ENCODE measurements at regions of chr2 and their contacts with region 1.

Region 1: DNA sequence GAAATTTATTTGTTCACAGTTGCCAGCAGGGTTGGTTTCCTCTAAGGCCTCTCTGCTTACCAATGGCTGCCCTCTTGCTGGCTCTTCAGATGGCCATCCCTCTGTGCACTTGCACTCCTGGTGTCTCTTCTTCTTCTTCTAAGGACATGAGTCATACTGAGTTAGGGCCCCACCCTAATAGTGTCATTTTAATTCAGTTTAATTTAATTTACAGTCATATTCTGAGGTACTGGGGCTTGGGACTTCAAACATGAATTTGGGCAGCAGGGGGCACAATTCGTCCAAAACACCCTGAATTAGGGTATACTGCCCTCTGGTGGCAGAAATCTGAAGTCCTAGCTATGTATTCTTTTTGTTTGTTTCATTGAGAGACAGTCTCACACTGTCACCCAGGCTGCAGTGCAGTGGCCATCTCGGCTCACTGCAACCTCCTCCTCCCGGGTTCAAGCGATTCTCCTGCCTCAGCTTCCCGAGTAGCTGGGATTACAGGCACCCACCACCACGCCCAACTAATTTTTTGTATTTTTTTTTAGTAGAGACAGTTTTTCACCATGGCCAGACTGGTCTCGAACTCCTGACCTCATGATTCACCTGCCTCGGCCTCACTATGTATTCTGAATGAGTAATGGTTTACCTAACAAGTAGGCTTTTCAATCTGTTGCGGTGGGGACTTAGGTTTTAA is 19.8 kb downstream of the SLC4A1AP start:
- DNase-seq: peak; percentile 36
- H3K4me3 ChIP-seq: no peak overlapping the region
- CTCF ChIP-seq: peak; percentile 71

Region 2: DNA sequence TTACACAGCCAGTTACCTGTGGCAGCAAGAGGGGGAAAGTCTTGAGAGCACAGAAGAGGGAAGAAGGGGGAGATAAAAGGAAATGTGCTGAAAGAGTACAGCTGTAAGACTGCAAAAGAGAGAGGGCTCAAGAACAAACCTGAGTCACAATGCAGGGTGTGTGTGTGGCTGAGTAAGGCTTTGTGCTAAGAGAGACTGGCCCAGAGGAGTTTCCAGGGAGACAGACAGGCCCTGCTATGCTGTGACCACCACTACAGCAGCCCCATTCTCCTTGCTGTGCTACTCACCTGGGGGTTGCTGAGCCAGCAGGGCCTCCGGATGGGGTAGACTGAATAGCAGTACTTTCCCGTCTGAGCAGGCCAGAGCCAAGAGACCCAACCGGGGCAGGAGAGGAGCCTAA is 348.2 kb before region 1 on chr2:
- CTCF ChIA-PET with region 1: no interaction called
- POLR2A ChIA-PET with region 1: no interaction called
- DNase-seq: no peak
- H3K4me3 ChIP-seq: no peak overlapping the region
- CTCF ChIP-seq: no peak

Region 3: GRCh38 chr2:27400348-27401135 is 283.0 kb before region 1 on chr2:
- CTCF ChIA-PET with region 1: interaction called, 57 read pairs
- POLR2A ChIA-PET with region 1: no interaction called
- DNase-seq: no peak
- H3K4me3 ChIP-seq: no peak overlapping the region
- CTCF ChIP-seq: no peak

Region 4: DNA sequence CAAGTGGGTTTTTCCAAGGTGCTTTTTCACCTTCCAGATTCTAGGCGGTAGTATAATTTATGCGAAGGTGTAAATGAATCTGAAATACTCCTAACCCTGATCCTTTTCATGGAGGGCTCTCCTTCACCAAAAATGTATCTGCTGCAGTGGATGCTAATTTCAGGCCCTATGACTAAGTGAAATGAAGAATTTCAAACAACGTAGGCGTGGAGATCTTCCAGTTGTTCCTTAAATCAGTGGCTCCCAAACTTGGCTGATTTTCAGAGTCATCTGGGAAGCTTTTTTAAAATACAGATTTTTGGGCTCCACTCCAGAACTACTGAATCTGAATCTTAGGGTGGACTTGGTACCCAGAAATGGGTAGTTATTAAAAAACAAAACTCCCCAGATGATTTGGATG is 181.4 kb before region 1 on chr2:
- CTCF ChIA-PET with region 1: interaction called, 10 read pairs
- POLR2A ChIA-PET with region 1: no interaction called
- DNase-seq: no peak
- H3K4me3 ChIP-seq: no peak overlapping the region
- CTCF ChIP-seq: no peak

Region 5: GRCh38 chr2:27663463-27664249 is 19.9 kb before region 1 on chr2 and contains the starts of genes SLC4A1AP and SUPT7L:
- CTCF ChIA-PET with region 1: interaction called, 74 read pairs
- POLR2A ChIA-PET with region 1: interaction called, 7 read pairs
- DNase-seq: no peak
- H3K4me3 ChIP-seq: peak within 1 kb of the TSS; percentile 97
- CTCF ChIP-seq: no peak

Region 6: GRCh38 chr2:27703638-27704341 is 20.3 kb after region 1 on chr2:
- CTCF ChIA-PET with region 1: interaction called, 48 read pairs
- POLR2A ChIA-PET with region 1: interaction called, 3 read pairs
- DNase-seq: peak; percentile 82
- H3K4me3 ChIP-seq: no peak overlapping the region
- CTCF ChIP-seq: peak; percentile 79

Region 7: GRCh38 chr2:28452534-28453081 is 769.1 kb after region 1 on chr2:
- CTCF ChIA-PET with region 1: interaction called, 16 read pairs
- POLR2A ChIA-PET with region 1: no interaction called
- DNase-seq: no peak
- H3K4me3 ChIP-seq: no peak overlapping the region
- CTCF ChIP-seq: peak; percentile 97

Measured in AG04449 (cell line).